ENCODE measurements at regions of chr20 and their contacts with region 1.

Region 1: DNA sequence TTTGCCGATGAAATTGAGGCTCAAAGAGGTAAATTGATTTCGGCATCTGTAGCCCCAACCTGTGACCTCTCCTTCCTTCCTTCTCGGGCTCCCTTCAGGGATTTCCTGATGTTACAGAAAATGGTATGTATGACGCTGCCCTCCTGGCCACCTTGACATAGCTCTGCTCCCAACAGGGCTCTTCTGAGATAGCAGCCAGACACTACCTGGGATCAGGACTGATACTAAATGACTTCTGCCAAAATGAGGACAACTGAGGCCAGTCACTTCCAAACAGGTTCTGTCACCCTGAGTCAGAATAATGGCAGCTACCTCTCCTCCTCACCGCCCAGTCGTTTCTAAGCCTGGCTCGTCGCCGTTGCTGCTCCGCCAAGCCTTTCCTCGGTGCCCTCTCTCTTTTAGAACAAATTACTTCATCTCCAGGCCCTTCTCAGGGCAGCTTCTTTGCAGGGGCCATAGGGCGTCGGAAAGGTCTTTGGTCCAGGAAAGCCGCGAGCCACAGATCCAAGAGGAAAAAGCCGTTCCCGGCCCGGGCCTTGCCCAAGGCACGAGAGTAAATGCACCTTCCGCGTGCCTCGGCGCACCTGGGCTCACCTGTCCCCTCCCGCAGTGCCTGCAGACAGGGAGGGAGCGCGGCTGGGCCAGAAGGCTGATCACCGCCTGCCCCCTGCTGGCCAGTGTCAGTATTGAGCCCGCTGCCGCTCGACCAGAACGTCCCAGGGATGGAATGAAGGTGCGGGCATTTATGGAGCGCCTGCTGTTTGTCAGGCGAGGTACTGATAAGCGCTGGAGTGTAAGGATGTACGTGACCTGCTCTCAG is 904 bp upstream of the LPIN3 start:
- DNase-seq: peak; percentile 87 to 98
- H3K4me3 ChIP-seq: no peak overlapping the region
- CTCF ChIP-seq: peak in 1 of 3 donors; percentile 99
- POLR2A ChIP-seq: no peak

Region 2: DNA sequence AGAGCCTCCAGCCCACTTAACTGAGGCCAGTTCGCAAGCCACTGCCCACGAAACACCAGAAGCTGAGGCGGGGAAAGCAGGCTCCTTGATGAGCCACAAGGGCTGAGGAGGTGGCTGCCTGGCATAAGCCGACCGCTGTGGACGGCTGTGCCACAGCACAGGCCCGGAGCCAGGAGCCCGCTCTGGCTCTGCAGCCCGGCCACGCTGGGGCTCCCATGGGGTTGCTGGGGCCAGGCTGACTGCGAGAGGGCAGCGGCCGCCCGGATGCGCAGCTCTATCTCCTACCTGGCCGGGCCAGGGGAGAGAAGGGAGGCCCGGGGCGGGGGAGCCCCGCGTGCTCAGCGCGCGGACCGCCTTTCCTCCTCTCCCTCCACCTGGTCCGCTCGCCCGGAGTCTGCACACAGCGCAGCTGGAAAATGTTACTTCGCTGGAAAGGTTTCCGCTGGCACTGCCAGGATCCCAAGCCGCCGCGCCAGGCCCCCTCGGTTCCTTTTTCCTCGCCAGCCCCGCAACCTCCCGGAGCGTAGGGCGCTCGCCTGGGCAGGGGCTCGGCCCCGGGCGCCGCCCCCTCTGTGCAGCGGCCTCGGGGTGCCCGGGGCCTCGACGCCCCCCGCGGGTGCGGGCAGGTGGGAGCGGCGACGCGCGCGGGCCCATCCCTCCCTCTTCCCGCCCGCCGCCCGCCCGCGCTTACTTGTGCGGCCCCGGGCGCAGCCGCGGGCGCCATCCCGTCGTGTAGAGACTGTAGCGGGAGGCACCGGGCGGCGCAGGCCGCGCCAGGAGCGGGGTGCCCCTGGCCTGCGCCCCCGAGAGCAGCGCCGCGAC is 26.3 kb after region 1 on chr20:
- intact Hi-C with region 1: no loop called
- DNase-seq: no peak
- H3K4me3 ChIP-seq: no peak overlapping the region
- CTCF ChIP-seq: no peak
- POLR2A ChIP-seq: no peak

Region 3: DNA sequence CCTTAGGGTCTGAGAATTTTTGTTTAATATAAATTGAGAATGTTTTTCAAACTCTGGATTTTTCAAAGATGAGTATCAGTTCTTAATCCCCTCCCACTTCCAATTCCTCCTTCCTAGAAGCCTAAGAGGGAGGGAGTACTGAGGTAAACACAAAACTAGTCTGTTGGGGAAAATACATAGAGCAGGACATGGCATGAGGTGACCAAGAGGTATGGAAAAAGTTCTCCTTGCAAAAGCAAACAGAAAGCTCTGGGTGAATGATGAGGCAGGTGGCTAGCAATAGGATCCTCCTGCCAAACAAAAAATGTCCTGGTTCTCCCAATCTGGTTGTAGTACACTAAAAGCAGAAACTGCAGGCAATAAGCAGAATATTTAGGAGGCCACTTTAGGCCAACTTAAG is 229.2 kb after region 1 on chr20:
- intact Hi-C with region 1: loop called (anchors 5 kb)
- DNase-seq: no peak
- H3K4me3 ChIP-seq: no peak overlapping the region
- CTCF ChIP-seq: no peak
- POLR2A ChIP-seq: no peak

Measured in lower leg skin (tissue), 4 donors.